Endothelial cell of umbilical vein (primary cell): ENCODE measurements at regions of chr7 and their contacts with region 1.

Region 1: GRCh38 chr7:31695859-31696614 is 9.0 kb downstream of the PPP1R17 start:
- DNase-seq: no peak
- H3K4me3 ChIP-seq: no peak overlapping the region
- H3K27ac ChIP-seq: no peak overlapping the region
- H3K4me1 ChIP-seq: no peaks in the 10 kb centered on the region
- H3K27me3 ChIP-seq: peaks cover 0 to 3% of the 10 kb centered on the region in 2 experiments
- CTCF ChIP-seq: no peak
- POLR2A ChIP-seq: no peak

Region 2: DNA sequence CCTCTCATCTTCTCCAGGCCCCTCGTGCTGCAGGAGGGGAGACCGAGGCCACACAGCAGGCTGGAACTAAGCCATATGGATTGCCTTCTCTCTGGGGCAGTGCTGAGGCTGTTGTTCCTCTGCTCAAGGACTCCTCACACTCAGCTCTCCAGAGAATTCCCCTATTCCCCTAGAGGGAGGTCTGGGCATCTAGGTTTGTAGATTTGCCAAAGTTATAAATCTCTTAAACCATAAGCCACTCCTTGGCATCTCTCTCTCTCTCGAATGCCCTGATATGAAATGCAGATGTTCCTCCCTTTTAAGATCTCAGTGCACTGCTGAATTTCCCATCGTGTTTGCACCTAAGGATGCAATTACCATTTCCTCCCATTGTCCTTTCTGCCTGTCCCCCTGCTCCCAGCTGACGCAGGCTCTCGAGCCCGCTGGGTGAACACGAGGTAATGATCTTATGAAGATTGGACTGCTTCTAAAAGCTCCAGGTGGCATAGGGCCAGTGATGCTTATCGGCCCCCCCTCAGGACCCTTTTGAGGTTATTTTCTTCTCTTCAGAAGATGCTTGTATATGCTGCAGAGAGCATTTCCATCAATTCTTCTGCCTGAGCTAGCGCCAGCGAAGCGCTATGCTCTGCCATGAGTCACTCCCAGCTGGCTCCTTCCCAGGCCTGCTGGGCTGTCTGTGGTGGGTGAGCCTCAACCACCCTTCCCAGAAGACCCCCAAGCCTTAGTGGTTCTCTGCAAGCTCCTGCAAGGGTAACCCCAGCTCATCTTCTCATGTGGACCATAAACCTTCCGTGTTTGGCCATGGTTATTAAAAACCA is 826.0 kb before region 1 on chr7:
- CTCF ChIA-PET with region 1: no interaction called
- POLR2A ChIA-PET with region 1: no interaction called
- dilution Hi-C with region 1: no loop called
- intact Hi-C with region 1: no loop called
- DNase-seq: peak; percentile 93
- H3K4me3 ChIP-seq: no peak overlapping the region
- H3K27ac ChIP-seq: peak overlapping the region; percentile 36
- H3K4me1 ChIP-seq: peaks cover 19% of the 10 kb centered on the region
- H3K27me3 ChIP-seq: no peaks in the 10 kb centered on the region
- CTCF ChIP-seq: peak in 1 of 2 donors; percentile 9
- POLR2A ChIP-seq: no peak

Region 3: DNA sequence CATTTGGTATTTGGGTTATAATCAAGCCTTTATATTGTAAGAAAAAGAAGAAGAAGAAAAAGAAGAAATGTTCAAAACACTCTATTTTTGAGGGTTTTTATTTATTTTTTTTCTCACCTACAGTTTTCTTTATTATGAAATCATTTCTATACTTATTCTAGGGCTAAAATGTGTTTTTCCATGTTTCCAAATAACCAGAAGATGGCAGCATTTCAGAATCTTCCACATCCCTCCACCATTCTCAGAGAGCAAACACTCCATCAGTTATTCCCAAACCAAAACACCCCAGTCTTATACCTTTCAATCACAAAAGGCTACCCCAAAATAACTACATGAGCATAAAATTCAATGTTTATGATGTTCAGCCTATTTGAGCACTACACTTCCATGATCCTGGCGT is 47.7 kb before region 1 on chr7:
- CTCF ChIA-PET with region 1: interaction called, 4 read pairs
- POLR2A ChIA-PET with region 1: no interaction called
- dilution Hi-C with region 1: no loop called
- intact Hi-C with region 1: loop called (anchors 5 kb)
- DNase-seq: no peak
- H3K4me3 ChIP-seq: no peak overlapping the region
- H3K27ac ChIP-seq: no peak overlapping the region
- H3K4me1 ChIP-seq: no peaks in the 10 kb centered on the region
- H3K27me3 ChIP-seq: no peaks in the 10 kb centered on the region
- CTCF ChIP-seq: peak in 1 of 2 donors; percentile 13
- POLR2A ChIP-seq: no peak